ENCODE measurements at regions of chr2 and their contacts with region 1.

Region 1: GRCh38 chr2:224025874-224026273 is 13.2 kb downstream of the SERPINE2 start:
- DNase-seq: no peak
- ATAC-seq: no peak
- H3K4me3 ChIP-seq: no peak overlapping the region
- H3K27ac ChIP-seq: no peak overlapping the region
- H3K4me1 ChIP-seq: peaks cover 37% of the 10 kb centered on the region
- CTCF ChIP-seq: no peak
- EP300 ChIP-seq: no peak
- POLR2A ChIP-seq: no peak
- RAD21 ChIP-seq: no peak

Region 2: DNA sequence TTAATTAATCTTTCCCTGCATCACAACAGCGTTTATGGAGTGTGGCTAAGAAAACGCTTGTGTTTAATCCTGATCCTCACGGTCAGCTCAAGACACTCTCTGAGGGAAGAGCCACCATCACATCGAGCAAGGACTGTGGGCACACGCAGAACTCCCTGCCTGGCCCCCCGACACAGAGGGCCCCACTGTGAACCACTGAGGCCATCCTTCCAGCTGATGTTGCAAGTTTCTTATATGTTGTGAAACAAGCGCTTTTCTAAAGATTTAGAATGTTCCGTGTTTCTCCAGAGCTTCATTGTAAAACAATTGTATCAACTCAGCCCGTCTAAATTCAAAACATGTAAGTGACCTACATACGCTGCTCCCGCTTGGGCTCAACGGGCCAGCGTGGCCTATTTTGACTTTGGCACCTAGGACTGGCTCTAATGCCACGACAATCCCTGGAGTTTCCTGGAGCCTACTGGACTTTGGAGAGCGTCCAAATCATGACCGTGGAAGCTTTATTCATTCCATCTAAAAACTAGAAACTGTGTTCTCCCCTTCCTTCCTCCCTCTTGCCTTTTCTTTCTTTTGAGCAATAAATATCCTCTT is 21.7 kb before region 1 on chr2:
- CTCF ChIA-PET with region 1: no interaction called
- POLR2A ChIA-PET with region 1: no interaction called
- DNase-seq: no peak
- ATAC-seq: no peak
- H3K4me3 ChIP-seq: no peak overlapping the region
- H3K27ac ChIP-seq: no peak overlapping the region
- H3K4me1 ChIP-seq: peaks cover 14% of the 10 kb centered on the region
- CTCF ChIP-seq: no peak
- EP300 ChIP-seq: no peak
- POLR2A ChIP-seq: no peak
- RAD21 ChIP-seq: no peak

Region 3: GRCh38 chr2:224039124-224039940 is 13.5 kb after region 1 on chr2 and contains the start of gene SERPINE2:
- CTCF ChIA-PET with region 1: interaction called, 10 read pairs
- POLR2A ChIA-PET with region 1: interaction called, 3 read pairs
- DNase-seq: peak; percentile 82 to 91
- ATAC-seq: peak; percentile 88 to 89
- H3K4me3 ChIP-seq: peak within 1 kb of the TSS; percentile 76
- H3K27ac ChIP-seq: peak within 1 kb of the TSS; percentile 90 to 93
- H3K4me1 ChIP-seq: peaks cover 22% of the 10 kb centered on the region
- CTCF ChIP-seq: peak; percentile 76
- EP300 ChIP-seq: no peak
- POLR2A ChIP-seq: peak; percentile 95
- RAD21 ChIP-seq: peak; percentile 94 to 98
- polyA plus RNA-seq, gene SERPINE2: 58.6 and 94.6 TPM in 2 replicates

Region 4: GRCh38 chr2:224058048-224058775 is 32.3 kb after region 1 on chr2:
- CTCF ChIA-PET with region 1: no interaction called
- POLR2A ChIA-PET with region 1: no interaction called
- DNase-seq: no peak
- ATAC-seq: no peak
- H3K4me3 ChIP-seq: no peak overlapping the region
- H3K27ac ChIP-seq: no peak overlapping the region
- H3K4me1 ChIP-seq: no peaks in the 10 kb centered on the region
- CTCF ChIP-seq: no peak
- EP300 ChIP-seq: no peak
- POLR2A ChIP-seq: no peak
- RAD21 ChIP-seq: no peak

Region 5: DNA sequence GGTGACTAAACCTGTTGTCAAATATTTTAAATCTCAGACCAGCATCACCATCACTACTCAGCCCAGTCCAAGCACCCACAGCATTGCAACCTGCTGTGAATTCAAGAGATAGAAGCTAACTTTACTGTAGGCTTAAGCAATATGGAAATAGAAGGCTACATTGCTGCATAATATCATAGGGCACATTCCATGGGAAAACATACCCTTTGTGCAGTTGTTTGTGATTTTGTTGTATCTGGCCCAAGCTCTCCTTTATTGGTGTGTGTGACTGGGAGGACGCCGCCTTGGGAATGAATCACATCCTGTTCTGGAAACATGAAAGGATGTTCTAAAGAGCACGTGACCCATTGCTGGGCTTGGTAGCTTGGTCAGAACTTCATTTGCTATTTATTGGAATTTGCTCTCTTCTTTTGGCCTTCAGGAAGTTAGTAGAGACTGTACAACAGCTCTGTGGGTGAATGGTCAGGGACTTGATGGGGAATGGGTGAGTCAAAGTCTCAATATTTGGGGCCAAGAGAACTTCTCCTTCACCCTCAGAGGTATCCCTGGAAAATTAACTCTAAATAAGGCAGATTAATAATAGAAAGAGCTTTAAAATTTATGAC is 120.0 kb after region 1 on chr2:
- CTCF ChIA-PET with region 1: no interaction called
- POLR2A ChIA-PET with region 1: no interaction called
- DNase-seq: peak; percentile 35 to 83
- ATAC-seq: peak; percentile 75 to 78
- H3K4me3 ChIP-seq: no peak overlapping the region
- H3K27ac ChIP-seq: peak overlapping the region; percentile 67 to 74
- H3K4me1 ChIP-seq: peaks cover 67% of the 10 kb centered on the region
- CTCF ChIP-seq: no peak
- EP300 ChIP-seq: no peak; a peak in 2 of 5 replicates
- POLR2A ChIP-seq: no peak
- RAD21 ChIP-seq: no peak; a peak in 1 of 5 replicates

Region 6: DNA sequence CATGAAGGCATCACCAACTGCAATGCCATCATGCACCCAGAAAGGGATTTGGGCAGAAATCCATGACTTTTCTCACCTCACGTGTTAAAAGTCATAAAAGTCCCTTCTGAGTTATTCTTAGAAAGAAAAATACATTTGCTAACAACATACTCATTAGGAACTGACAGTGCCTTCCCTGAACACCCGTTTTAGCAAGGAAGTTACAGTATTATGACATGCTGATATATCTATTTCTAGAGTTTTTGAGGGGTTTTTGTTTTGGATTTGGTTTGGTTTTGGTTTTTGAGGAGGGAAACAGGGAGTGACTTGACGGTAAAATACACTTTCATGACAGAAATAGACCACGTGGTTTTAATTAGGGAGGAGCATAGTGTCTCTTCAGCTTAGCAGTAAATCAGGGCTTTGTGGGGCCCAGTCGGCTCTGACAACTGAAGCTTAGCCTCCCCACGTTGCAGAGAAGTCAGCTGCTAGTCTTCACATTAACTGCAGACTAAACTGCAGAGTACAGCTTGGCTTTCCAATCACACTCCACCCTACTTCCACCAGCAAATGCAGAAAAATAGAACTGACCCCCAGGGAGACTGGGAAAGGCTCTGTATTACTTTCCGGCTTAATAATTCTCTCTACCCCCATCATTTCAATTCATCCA is 234.6 kb after region 1 on chr2:
- CTCF ChIA-PET with region 1: no interaction called
- POLR2A ChIA-PET with region 1: no interaction called
- DNase-seq: no peak
- ATAC-seq: no peak
- H3K4me3 ChIP-seq: no peak overlapping the region
- H3K27ac ChIP-seq: no peak overlapping the region
- H3K4me1 ChIP-seq: peaks cover 18% of the 10 kb centered on the region
- CTCF ChIP-seq: no peak
- EP300 ChIP-seq: no peak
- POLR2A ChIP-seq: no peak
- RAD21 ChIP-seq: no peak

Region 7: DNA sequence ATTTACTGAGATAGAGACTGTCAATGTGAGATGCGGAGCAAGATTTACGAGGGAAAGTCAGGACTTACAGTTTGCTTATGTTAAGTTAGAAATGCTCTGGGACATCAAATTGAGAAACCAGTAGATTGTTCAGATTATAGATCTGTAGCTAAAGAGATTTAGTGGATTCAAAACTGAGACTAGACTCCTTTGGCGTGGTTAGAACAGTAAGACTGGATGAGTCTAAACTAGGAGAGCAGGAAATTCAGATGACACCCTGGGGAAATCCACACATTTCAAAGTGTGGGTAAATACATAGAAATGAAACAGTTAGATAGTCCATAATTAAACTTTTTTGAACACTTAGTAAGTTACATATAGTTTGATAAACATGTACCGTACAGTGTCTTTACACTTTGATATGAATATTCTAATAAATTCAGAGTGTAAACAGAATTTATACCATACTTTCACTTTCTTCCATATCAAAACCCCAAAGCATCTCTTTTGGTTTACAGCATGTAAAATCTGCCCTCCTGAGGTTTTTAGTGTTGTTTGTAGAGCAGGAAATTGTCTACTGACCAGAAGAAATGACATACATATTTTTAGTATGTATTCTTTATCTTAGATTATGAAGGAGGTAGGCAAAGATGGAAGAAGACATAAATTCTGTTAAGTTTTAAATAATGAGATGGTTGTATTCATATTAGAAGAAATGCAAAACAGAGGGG is 1605.1 kb after region 1 on chr2:
- CTCF ChIA-PET with region 1: no interaction called
- POLR2A ChIA-PET with region 1: interaction called, 10 read pairs
- DNase-seq: no peak
- ATAC-seq: no peak
- H3K4me3 ChIP-seq: no peak overlapping the region
- H3K27ac ChIP-seq: no peak overlapping the region
- H3K4me1 ChIP-seq: no peaks in the 10 kb centered on the region
- CTCF ChIP-seq: no peak
- EP300 ChIP-seq: no peak
- POLR2A ChIP-seq: no peak
- RAD21 ChIP-seq: no peak